ENCODE measurements at regions of chr10 and their contacts with region 1.

Region 1: GRCh38 chr10:35392482-35393228 is 56.3 kb downstream of the CCNY start:
- DNase-seq: no peak
- ATAC-seq: no peak

Region 2: DNA sequence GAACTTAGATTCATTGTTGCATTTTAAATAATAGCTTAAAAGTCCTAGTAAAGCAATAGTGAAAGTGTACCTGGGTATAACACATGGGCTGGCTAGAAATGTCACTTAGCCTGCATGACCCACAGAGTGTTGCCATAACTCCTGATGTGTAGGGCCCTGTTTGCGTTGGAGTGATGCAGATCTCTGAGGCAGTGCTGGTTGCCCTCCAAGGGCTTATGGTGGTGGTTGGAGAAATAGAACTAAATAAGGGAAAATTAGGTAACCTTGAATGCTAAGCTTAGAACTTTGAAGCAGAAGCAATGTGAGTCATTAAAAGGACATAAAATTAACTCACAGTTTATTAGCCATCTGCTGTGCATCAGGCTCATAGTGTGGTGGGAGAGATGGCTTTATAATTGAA is 49.4 kb after region 1 on chr10:
- intact Hi-C with region 1: loop called (anchors 2 kb)
- DNase-seq: no peak
- ATAC-seq: no peak